ENCODE measurements at regions of chr3 and their contacts with region 1.

Region 1: GRCh38 chr3:126752303-126752842 is 48.3 kb downstream of the CHCHD6 start:
- DNase-seq: peak; percentile 86
- ATAC-seq: peak; percentile 94

Region 2: GRCh38 chr3:126731044-126731443 is 21.3 kb before region 1 on chr3:
- intact Hi-C with region 1: no loop called
- DNase-seq: peak; percentile 51
- ATAC-seq: no peak

Region 3: GRCh38 chr3:126982471-126983175 is 230.2 kb after region 1 on chr3 and contains the start of gene PLXNA1:
- intact Hi-C with region 1: loop called (anchors 5 kb)
- DNase-seq: peak; percentile 86
- ATAC-seq: peak; percentile 84
- total RNA-seq, gene PLXNA1: 35.9 TPM